ENCODE measurements at regions of chr12 and their contacts with region 1.

Region 1: DNA sequence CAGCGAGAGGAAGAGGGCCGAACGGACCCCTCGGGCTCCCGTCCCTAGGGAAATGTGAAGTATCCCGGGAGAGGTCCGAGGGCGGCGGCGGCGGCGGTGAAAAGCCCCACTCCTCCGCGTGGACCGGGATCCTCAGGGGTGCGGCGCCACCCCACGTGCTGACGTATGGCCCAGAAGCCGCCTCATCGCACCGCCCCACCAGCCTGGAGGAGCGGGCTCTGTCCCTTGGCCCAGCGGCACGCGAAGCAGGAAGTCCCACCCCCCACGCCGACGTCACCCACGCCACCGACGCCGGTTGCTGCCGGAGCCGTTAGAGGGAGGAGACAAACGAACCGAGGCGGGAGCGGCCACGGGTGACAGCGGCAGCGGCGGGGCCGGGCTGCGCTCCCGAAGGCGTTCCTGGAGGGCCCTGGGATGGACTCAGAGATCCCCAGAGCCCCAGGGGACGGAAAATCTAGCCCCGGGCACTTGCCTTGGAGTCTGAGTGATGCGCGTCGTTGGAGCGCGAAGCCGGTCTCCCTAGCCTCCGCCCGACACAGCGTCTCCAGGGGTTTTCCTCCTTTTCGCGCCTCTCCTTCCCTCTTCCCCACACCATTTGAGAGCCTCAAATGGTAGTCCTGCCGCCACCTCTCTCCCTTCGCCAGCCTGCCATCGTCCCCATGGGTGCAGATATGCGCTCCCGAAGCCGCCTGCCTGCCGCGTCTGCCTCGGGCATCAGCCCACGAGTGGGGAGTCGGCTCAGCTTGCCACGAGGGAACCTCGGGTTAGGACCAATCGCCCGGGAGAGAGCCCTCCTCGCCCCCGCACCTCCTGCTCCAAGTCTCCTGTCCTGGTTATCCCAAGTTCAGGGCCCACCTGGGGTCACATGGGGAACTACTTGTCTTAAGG is at the start of gene CEP83:
- DNase-seq: peak; percentile 98
- H3K4me3 Mint-ChIP-seq: peak within 1 kb of the TSS; percentile 97
- H3K27ac Mint-ChIP-seq: peak within 1 kb of the TSS; percentile 91
- H3K4me1 Mint-ChIP-seq: peaks cover 29% of the 10 kb centered on the region
- H3K27me3 Mint-ChIP-seq: peaks cover 5% of the 10 kb centered on the region
- total RNA-seq, gene CEP83: 19.0 to 21.5 TPM

Region 2: DNA sequence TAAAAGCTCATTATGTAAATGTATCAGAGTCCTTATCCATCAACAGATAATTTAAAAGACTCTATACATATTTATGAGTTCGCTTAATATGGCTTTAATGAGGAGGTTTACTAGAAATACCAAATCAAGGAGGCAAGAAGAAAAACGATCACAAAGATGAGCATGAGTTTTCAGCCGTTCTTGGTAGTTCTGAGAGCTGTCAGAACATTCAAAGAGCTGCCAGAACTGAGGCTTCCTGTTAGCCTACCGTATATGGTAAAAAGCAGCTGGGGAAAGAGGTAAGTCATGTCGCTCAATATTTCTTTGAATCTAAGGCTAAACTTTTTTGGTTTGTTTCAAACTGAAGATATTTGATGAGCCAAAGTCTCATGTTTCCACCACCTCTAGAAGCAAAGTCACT is 426.9 kb before region 1 on chr12:
- CTCF ChIA-PET with region 1: no interaction called
- intact Hi-C with region 1: loop called (anchors 1 kb)
- DNase-seq: peak; percentile 22
- H3K4me3 Mint-ChIP-seq: no peak overlapping the region
- H3K27ac Mint-ChIP-seq: peak overlapping the region; percentile 50
- H3K4me1 Mint-ChIP-seq: peaks cover 40% of the 10 kb centered on the region
- H3K27me3 Mint-ChIP-seq: no peaks in the 10 kb centered on the region

Region 3: GRCh38 chr12:94372461-94372860 is 87.5 kb before region 1 on chr12:
- CTCF ChIA-PET with region 1: no interaction called
- intact Hi-C with region 1: loop called (anchors 1 kb)
- DNase-seq: peak; percentile 7
- H3K4me3 Mint-ChIP-seq: no peak overlapping the region
- H3K27ac Mint-ChIP-seq: peak overlapping the region; percentile 66
- H3K4me1 Mint-ChIP-seq: peaks cover 23% of the 10 kb centered on the region
- H3K27me3 Mint-ChIP-seq: no peaks in the 10 kb centered on the region

Region 4: GRCh38 chr12:94427501-94428381 is 32.2 kb before region 1 on chr12:
- CTCF ChIA-PET with region 1: no interaction called
- intact Hi-C with region 1: loop called (anchors 1 kb)
- DNase-seq: peak; percentile 45
- H3K4me3 Mint-ChIP-seq: peak overlapping the region; percentile 28
- H3K27ac Mint-ChIP-seq: peak overlapping the region; percentile 63
- H3K4me1 Mint-ChIP-seq: peaks cover 34% of the 10 kb centered on the region
- H3K27me3 Mint-ChIP-seq: no peaks in the 10 kb centered on the region